ENCODE measurements at regions of chr11 and their contacts with region 1.

Region 1: DNA sequence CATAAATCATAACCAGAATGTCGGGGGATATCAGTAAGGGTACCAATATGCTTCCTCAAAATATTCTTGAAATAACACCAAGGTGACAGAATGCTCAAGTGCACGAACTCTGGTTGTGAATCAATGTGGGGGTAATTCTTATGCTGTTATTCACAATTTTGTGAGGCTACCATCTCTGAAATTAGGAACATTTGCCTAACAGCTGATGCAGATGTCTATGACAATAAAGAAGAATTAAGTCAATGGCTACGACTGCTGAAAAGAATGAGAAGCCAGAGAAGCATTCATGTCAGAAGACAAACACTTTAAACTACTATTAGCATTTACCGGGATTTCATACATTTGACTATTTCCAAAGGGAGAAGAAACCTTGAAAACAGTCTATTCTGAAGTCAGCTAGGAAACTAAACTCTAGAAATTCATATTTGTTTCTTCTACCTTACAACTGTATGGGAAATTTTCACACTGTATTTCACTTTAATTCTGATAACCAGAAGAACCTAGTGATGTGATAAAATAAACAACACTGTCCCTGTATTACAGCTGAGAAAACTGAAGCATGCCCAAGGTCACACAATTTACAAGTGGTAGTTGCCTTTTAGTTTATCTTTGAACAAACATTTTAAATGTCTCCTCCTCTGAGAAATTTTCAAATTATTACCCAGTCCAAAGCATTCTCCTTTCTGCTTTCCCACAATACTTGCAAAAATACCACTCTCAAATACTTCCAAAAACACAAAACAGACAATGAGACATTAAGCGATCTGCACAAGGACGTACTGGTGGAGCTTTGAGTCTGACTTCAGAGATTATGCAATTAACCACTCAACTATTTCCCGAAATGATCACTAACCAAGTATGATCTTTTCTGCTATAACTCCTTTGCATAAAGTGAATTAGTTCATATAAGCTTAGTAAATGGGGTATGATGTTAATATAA is 18.0 kb upstream of the ARHGAP32 start:
- DNase-seq: no peak
- H3K4me3 ChIP-seq: no peak overlapping the region
- H3K4me3 Mint-ChIP-seq: no peak overlapping the region
- H3K27ac Mint-ChIP-seq: peak overlapping the region; percentile 4
- H3K4me1 ChIP-seq: peaks cover 10% of the 10 kb centered on the region
- H3K4me1 Mint-ChIP-seq: peaks cover 21% of the 10 kb centered on the region
- H3K27me3 ChIP-seq: no peaks in the 10 kb centered on the region
- H3K27me3 Mint-ChIP-seq: no peaks in the 10 kb centered on the region
- CTCF ChIP-seq: no peak

Region 2: GRCh38 chr11:129143335-129143734 is 66.8 kb before region 1 on chr11:
- CTCF ChIA-PET with region 1: no interaction called
- POLR2A ChIA-PET with region 1: no interaction called
- intact Hi-C with region 1: loop called (anchors 5 kb)
- DNase-seq: peak; percentile 87 to 89
- H3K4me3 ChIP-seq: no peak overlapping the region
- H3K4me3 Mint-ChIP-seq: peak overlapping the region; percentile 53
- H3K27ac Mint-ChIP-seq: peak overlapping the region; percentile 66
- H3K4me1 ChIP-seq: peaks cover 35% of the 10 kb centered on the region
- H3K4me1 Mint-ChIP-seq: peaks cover 37% of the 10 kb centered on the region
- H3K27me3 ChIP-seq: no peaks in the 10 kb centered on the region
- H3K27me3 Mint-ChIP-seq: no peaks in the 10 kb centered on the region
- CTCF ChIP-seq: no peak

Measured in Caco-2 (cell line).